ENCODE measurements at regions of chr3 and their contacts with region 1.

Region 1: DNA sequence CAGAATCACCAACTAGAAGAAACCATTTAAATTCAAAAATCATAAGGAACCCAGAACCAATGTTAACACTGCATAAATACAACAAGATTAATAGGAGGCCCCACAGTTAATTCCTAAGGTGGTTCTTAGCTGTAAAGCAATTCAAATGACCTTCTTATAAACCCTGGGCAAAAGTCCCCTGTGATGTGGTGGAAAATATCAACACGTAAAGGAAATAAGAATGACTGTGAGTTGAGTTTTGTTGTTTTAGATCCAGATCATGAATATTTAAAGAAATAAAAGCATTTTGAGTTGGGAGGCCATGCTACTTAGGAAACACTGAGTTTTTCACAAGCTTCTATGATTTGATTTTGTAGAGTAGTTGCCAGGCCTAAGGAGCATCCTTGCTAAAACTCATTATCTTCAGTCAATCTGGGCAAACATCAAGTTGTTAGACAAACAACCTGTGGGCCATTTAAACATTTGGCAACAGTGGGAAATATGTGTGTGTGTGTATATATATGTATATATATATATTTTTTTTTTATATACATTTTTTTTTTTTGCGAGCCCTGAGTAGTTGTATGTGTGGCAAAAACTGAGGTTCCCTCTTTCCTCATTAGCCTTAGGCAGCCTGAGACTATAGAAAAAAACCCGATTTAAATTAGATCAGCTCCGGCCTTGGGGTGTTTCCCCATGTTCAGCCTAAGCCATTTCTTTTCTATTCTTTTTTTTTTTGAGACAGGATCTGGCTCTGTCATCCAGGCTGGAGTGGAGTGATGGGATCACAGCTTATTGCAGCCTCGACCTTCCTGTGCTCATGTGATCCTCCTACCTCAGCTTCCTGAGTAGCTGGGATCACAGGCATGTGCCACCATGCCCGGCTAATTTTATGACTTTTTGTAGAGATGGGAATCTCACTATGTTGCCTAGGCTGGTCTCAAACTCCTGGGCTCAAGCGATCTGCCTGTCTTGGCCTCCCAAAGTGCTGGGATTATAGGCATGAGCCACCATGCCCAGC is 8.0 kb upstream of the PXK start:
- DNase-seq: no peak
- ATAC-seq: no peak
- H3K4me3 Mint-ChIP-seq: no peak overlapping the region
- H3K27ac Mint-ChIP-seq: peak overlapping the region; percentile 23; the same call in 1 of the 2 replicates
- H3K4me1 Mint-ChIP-seq: peaks cover 33% of the 10 kb centered on the region
- H3K27me3 Mint-ChIP-seq: no peaks in the 10 kb centered on the region
- CTCF ChIP-seq: no peak

Region 2: GRCh38 chr3:58349792-58350626 is 25.3 kb after region 1 on chr3:
- CTCF ChIA-PET with region 1: interaction called, 10 read pairs
- POLR2A ChIA-PET with region 1: no interaction called
- DNase-seq: no peak
- ATAC-seq: no peak
- H3K4me3 Mint-ChIP-seq: no peak overlapping the region
- H3K27ac Mint-ChIP-seq: no peak overlapping the region
- H3K4me1 Mint-ChIP-seq: peaks cover 14% of the 10 kb centered on the region
- H3K27me3 Mint-ChIP-seq: no peaks in the 10 kb centered on the region
- CTCF ChIP-seq: no peak

Region 3: DNA sequence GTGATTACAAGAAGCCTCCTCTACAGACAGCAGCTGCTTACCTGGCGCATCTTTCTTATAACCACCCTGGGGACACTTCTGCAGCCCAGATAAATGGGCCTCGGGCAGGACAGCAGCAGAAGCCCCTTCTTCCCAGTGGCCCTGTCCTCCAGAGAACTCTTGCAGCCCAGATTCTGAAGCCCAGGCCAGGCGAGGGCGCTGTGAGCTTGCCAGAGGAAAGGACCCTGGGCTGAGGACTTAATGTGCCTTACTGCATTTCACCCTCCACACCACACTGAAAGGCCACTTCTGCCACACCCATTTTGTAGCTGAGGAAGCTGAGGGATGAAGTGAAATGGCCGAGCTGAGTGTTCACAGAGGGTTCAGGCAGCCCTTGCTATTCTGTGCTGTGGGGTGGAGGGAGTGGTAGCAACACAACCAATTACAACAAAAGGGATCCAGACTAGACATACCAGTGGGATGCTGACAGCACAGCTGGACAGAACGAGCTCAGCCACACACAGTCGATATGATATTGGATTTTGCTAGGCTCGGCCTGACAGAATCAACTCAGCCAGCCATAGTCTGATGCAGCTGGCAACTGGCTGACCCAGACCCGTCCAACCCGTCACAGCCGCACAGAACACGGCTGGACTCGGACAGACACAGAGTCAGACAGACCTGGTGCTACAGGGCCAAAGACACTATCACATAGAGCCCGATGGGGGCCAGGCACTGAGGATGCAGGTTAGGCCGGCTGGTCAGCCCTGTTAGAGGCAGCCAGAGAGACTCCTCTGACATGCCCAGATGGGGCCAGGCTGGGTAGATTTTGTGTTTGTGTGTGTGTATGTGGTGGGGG is 205.0 kb after region 1 on chr3:
- CTCF ChIA-PET with region 1: interaction called, 15 read pairs
- POLR2A ChIA-PET with region 1: no interaction called
- DNase-seq: peak; percentile 88
- ATAC-seq: peak; percentile 88
- H3K4me3 Mint-ChIP-seq: no peak overlapping the region
- H3K27ac Mint-ChIP-seq: peak overlapping the region; percentile 63; the same call in 1 of the 2 replicates
- H3K4me1 Mint-ChIP-seq: peaks cover 14% of the 10 kb centered on the region
- H3K27me3 Mint-ChIP-seq: no peaks in the 10 kb centered on the region
- CTCF ChIP-seq: peak; percentile 32; the same call in 1 of the 2 replicates

Region 4: DNA sequence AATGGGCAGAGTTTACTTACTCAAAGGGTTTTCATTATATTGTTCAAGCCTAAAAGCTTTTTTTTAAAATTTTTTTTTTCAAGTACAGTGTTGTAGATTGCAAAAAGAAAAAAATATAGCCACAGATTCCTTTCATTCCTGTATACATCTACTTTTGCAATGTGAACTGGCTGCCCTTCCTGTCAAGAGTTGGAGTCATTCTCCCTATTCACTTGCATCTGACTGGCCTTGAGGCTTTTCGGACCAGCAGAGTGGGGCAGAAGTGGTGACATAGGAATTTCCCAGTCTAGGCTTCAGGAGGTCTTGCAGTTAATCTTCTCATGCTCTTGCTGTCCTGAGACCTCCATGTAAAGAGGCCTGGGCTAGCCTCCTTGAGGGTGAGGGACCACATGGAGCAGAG is 943.5 kb after region 1 on chr3:
- CTCF ChIA-PET with region 1: no interaction called
- POLR2A ChIA-PET with region 1: no interaction called
- DNase-seq: no peak
- ATAC-seq: no peak
- H3K4me3 Mint-ChIP-seq: no peak overlapping the region
- H3K27ac Mint-ChIP-seq: no peak overlapping the region
- H3K4me1 Mint-ChIP-seq: no peaks in the 10 kb centered on the region
- H3K27me3 Mint-ChIP-seq: no peaks in the 10 kb centered on the region
- CTCF ChIP-seq: no peak